Left ventricle myocardium inferior (tissue), 1 donor: ENCODE measurements at regions of chr5 and their contacts with region 1.

Region 1: GRCh38 chr5:136249678-136250266 is 56.8 kb upstream of the SMIM32 start:
- DNase-seq: peak; percentile 33
- H3K4me3 ChIP-seq: no peak overlapping the region
- H3K27ac ChIP-seq: no peak overlapping the region
- H3K4me1 ChIP-seq: no peaks in the 10 kb centered on the region
- H3K27me3 ChIP-seq: peaks cover 61% of the 10 kb centered on the region
- CTCF ChIP-seq: peak; percentile 84

Region 2: DNA sequence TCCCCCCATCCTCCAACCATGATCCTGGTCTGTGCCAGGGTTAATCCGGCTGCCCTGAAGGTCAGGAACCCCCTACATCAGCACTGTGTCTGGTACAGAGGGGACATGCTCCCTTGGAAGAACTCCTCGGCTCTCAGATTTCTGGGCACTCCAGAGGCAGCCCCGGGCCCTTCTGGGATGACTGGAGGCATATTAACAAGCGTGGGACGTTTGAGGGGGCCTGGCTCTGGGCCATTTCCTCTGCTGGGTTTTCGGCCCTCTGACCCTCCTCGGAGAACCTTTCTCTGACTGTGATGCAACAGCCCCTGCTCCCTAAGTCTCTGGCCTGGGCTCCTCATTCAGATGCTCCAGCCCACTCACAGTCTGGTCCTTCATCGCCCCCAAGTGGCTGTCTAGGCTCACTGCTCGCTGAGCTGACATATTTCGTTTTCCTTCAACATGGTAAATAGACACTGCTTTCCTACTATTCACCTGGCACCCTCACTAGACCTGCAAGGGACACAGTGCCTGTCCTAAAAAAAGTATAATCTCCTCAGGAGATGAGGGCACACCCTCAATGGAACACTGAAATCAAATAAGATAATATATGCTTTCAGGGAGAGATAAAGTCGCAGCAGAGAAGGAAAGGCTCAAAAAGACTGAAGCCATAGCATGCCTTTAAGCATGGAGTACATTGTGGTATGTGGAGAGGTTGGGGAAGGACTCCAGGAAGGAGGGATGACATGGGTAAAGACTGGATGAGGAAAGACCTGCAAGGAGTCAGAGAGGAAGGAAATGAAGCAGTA is 520.3 kb after region 1 on chr5:
- intact Hi-C with region 1: loop called (anchors 10 kb)
- DNase-seq: peak; percentile 33
- H3K4me3 ChIP-seq: no peak overlapping the region
- H3K27ac ChIP-seq: no peak overlapping the region
- H3K4me1 ChIP-seq: no peaks in the 10 kb centered on the region
- H3K27me3 ChIP-seq: peaks cover 43% of the 10 kb centered on the region
- CTCF ChIP-seq: peak; percentile 84